Natural killer cell (primary cell): ENCODE measurements at regions of chr19 and their contacts with region 1.

Region 1: GRCh38 chr19:12551060-12551832 is at the start of gene ZNF564:
- DNase-seq: peak; percentile 90 to 96
- ATAC-seq: peak; percentile 95 to 99 (median 96)
- H3K4me3 ChIP-seq: peak within 1 kb of the TSS; percentile 91
- H3K4me3 Mint-ChIP-seq: peak within 1 kb of the TSS; percentile 99
- H3K27ac ChIP-seq: peak within 1 kb of the TSS; percentile 85
- H3K27ac Mint-ChIP-seq: peak within 1 kb of the TSS; percentile 98
- H3K4me1 ChIP-seq: peaks cover 35% of the 10 kb centered on the region
- H3K4me1 Mint-ChIP-seq: peaks cover 49 to 53% of the 10 kb centered on the region in 2 donors
- H3K27me3 ChIP-seq: no peaks in the 10 kb centered on the region
- H3K27me3 Mint-ChIP-seq: peaks cover 0 to 2% of the 10 kb centered on the region in 2 donors
- CTCF ChIP-seq: no peak
- total RNA-seq, gene ZNF564: 22.0 to 27.1 (median 23.3) TPM

Region 2: GRCh38 chr19:12139885-12140547 is 411.2 kb before region 1 on chr19 and contains the start of gene ZNF20:
- intact Hi-C with region 1: no loop called
- DNase-seq: peak; percentile 90 to 92
- ATAC-seq: peak; percentile 95 to 98 (median 96)
- H3K4me3 ChIP-seq: peak within 1 kb of the TSS; percentile 76
- H3K4me3 Mint-ChIP-seq: peak within 1 kb of the TSS; percentile 95
- H3K27ac ChIP-seq: peak within 1 kb of the TSS; percentile 56
- H3K27ac Mint-ChIP-seq: peak within 1 kb of the TSS; percentile 79 to 90
- H3K4me1 ChIP-seq: peaks cover 27% of the 10 kb centered on the region
- H3K4me1 Mint-ChIP-seq: peaks cover 35 to 38% of the 10 kb centered on the region in 2 donors
- H3K27me3 ChIP-seq: no peaks in the 10 kb centered on the region
- H3K27me3 Mint-ChIP-seq: no peaks in the 10 kb centered on the region
- CTCF ChIP-seq: no peak
- total RNA-seq, gene ZNF20: 4.2 to 9.0 (median 4.6) TPM

Region 3: GRCh38 chr19:12495002-12495802 is 56.0 kb before region 1 on chr19:
- intact Hi-C with region 1: loop called (anchors 2 kb)
- DNase-seq: peak; percentile 88 to 96
- ATAC-seq: peak; percentile 97 to 99 (median 99)
- H3K4me3 ChIP-seq: peak overlapping the region; percentile 36
- H3K4me3 Mint-ChIP-seq: peak overlapping the region; percentile 87
- H3K27ac ChIP-seq: peak overlapping the region; percentile 55
- H3K27ac Mint-ChIP-seq: peak overlapping the region; percentile 66 to 90
- H3K4me1 ChIP-seq: peaks cover 9% of the 10 kb centered on the region
- H3K4me1 Mint-ChIP-seq: peaks cover 11 to 15% of the 10 kb centered on the region in 2 donors
- H3K27me3 ChIP-seq: no peaks in the 10 kb centered on the region
- H3K27me3 Mint-ChIP-seq: no peaks in the 10 kb centered on the region
- CTCF ChIP-seq: peak; percentile 42

Region 4: DNA sequence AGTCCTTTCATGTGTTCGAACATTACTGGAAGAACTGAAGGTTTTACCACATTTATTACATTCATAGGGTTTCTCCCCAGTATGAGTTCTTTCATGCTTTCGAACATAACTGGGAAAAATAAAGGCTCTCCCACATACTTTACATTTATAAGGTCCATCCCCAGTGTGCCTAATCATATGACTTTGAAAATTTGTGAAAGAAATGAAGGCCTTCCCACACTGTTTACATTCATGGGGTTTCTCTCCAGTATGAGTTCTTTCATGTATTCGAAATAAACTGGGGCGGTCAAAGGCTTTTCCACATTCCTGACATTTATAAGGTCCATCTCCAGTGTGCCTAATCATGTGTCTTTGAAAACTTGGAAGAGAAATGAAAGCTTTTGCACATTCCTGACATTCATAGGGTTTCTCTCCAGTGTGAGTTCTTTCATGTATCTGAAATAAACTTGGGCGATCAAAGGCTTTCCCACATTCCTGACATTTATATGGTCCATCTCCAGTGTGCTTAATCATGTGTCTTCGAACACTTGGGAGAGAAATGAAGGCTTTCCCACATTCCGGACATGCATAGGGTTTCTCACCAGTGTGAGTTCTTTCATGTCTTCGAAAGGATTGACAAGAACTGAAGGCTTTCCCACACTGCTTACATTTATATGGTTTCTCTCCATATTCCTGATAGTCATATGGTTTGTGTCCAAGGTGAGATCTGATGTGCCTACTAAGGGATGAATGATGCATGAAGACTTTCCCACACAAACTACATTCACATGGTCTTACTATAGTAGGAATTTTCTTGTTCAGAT is 24.0 kb before region 1 on chr19:
- intact Hi-C with region 1: no loop called
- DNase-seq: peak in 1 of 2 donors; percentile 10
- ATAC-seq: no peak
- H3K4me3 ChIP-seq: no peak overlapping the region
- H3K4me3 Mint-ChIP-seq: no peak overlapping the region
- H3K27ac ChIP-seq: no peak overlapping the region
- H3K27ac Mint-ChIP-seq: no peak overlapping the region
- H3K4me1 ChIP-seq: no peaks in the 10 kb centered on the region
- H3K4me1 Mint-ChIP-seq: no peaks in the 10 kb centered on the region
- H3K27me3 ChIP-seq: no peaks in the 10 kb centered on the region
- H3K27me3 Mint-ChIP-seq: no peaks in the 10 kb centered on the region
- CTCF ChIP-seq: no peak

Region 5: GRCh38 chr19:12610540-12611360 is 59.5 kb after region 1 on chr19 and contains the starts of genes ZNF490 and ZNF791:
- intact Hi-C with region 1: loop called (anchors 2 kb)
- DNase-seq: peak; percentile 95 to 97
- ATAC-seq: peak; percentile 93 to 98 (median 95)
- H3K4me3 ChIP-seq: peak within 1 kb of the TSS; percentile 90
- H3K4me3 Mint-ChIP-seq: peak within 1 kb of the TSS; percentile 99
- H3K27ac ChIP-seq: peak within 1 kb of the TSS; percentile 95
- H3K27ac Mint-ChIP-seq: peak within 1 kb of the TSS; percentile 98 to 99
- H3K4me1 ChIP-seq: peaks cover 49% of the 10 kb centered on the region
- H3K4me1 Mint-ChIP-seq: peaks cover 24 to 28% of the 10 kb centered on the region in 2 donors
- H3K27me3 ChIP-seq: no peaks in the 10 kb centered on the region
- H3K27me3 Mint-ChIP-seq: no peaks in the 10 kb centered on the region
- CTCF ChIP-seq: no peak
- total RNA-seq, gene ZNF490: 12.0 to 21.4 (median 20.9) TPM
- total RNA-seq, gene ZNF791: 52.6 to 62.0 (median 56.5) TPM

Region 6: DNA sequence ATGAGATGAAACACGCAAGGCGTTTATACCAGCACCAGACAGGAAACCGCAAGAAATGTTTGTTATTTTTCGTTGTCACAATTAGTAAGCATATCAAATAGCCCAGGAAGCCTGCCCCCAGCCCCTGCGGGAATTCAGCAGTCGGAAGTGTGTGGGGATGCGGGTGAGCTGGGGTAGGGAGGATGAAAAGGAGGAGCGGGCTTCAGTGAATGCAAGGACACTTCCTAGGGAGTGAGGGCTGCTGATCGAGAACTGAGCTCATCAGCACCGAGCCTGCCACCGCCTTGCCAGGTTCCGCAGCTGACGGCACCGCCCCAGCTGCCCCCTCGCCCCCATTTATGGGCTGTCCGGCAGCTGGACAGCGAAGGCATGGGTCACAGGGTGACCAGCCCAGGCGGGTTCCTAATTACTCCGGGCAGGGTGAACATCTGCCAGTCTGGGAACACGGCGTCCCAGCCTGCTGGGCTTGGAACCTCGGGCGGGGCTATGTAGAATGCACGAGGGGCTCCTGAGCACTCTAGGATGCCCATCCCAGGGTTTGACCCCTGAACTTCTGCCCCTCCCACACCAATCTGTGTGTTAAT is 198.8 kb after region 1 on chr19:
- intact Hi-C with region 1: no loop called
- DNase-seq: no peak
- ATAC-seq: peak in 1 of 3 donors; percentile 20
- H3K4me3 ChIP-seq: no peak overlapping the region
- H3K4me3 Mint-ChIP-seq: no peak overlapping the region
- H3K27ac ChIP-seq: no peak overlapping the region
- H3K27ac Mint-ChIP-seq: no peak overlapping the region
- H3K4me1 ChIP-seq: no peaks in the 10 kb centered on the region
- H3K4me1 Mint-ChIP-seq: peaks cover 0 to 5% of the 10 kb centered on the region in 2 donors
- H3K27me3 ChIP-seq: no peaks in the 10 kb centered on the region
- H3K27me3 Mint-ChIP-seq: peaks cover 14 to 15% of the 10 kb centered on the region in 2 donors
- CTCF ChIP-seq: no peak